ENCODE measurements at regions of chr7 and their contacts with region 1.

Region 1: GRCh38 chr7:25565949-25566348 is 337.7 kb upstream of the NPVF start:
- DNase-seq: peak; percentile 73
- H3K4me3 ChIP-seq: no peak overlapping the region
- H3K27ac ChIP-seq: peak overlapping the region in 2 of 4 donors; percentile 4 to 49
- H3K4me1 ChIP-seq: peaks cover 0 to 19% (median 4%) of the 10 kb centered on the region in 4 donors
- H3K27me3 ChIP-seq: no peaks in the 10 kb centered on the region
- CTCF ChIP-seq: peak; percentile 100
- EP300 ChIP-seq: no peak
- POLR2A ChIP-seq: no peak

Region 2: DNA sequence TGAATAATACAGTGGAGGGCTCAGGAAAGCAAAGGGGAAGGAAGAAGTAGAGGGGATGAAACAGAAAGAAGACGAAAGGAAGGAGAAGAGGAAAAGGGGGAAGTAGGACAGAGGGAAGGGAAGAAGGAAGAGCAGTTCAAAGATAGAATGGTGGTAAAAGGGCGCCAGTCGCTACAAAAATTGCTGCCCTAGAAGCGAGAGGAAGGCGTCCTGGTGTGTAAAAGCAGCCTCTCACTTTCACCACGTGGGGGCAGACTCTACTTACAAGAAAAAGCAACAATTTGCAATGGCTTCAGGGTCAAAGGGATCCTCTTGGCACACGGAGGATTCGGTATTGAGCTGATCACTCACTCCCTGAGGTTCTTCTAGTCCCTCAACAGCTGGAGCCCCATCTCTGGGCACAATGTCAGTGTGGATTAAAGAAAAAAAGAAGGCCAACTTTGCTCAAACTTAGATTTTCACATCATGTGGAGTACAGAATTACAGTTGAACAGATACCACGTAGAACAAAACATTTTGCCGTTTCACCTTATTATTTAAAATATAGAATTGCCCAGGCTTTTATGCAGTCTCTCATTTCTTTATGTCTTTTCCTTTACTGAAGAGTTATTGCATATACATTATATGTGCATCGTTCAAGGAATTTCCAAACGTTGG is 306.2 kb before region 1 on chr7:
- in situ Hi-C with region 1: loop called (anchors 5 to 10 kb)
- intact Hi-C with region 1: no loop called
- DNase-seq: peak; percentile 76
- H3K4me3 ChIP-seq: no peak overlapping the region
- H3K27ac ChIP-seq: peak overlapping the region in 2 of 4 donors; percentile 76 to 77
- H3K4me1 ChIP-seq: peaks cover 14 to 37% (median 29%) of the 10 kb centered on the region in 4 donors
- H3K27me3 ChIP-seq: no peaks in the 10 kb centered on the region
- CTCF ChIP-seq: peak; percentile 82 to 88 (median 83)
- EP300 ChIP-seq: no peak
- POLR2A ChIP-seq: no peak

Region 3: GRCh38 chr7:25520017-25520416 is 45.9 kb before region 1 on chr7:
- in situ Hi-C with region 1: no loop called
- intact Hi-C with region 1: loop called (anchors 1 kb)
- DNase-seq: no peak
- H3K4me3 ChIP-seq: no peak overlapping the region
- H3K27ac ChIP-seq: no peak overlapping the region
- H3K4me1 ChIP-seq: no peaks in the 10 kb centered on the region
- H3K27me3 ChIP-seq: no peaks in the 10 kb centered on the region
- CTCF ChIP-seq: no peak
- EP300 ChIP-seq: no peak
- POLR2A ChIP-seq: no peak

Region 4: GRCh38 chr7:25597946-25598345 is 32.0 kb after region 1 on chr7:
- in situ Hi-C with region 1: no loop called
- intact Hi-C with region 1: no loop called
- DNase-seq: no peak
- H3K4me3 ChIP-seq: no peak overlapping the region
- H3K27ac ChIP-seq: no peak overlapping the region
- H3K4me1 ChIP-seq: peaks cover 0 to 16% (median 5%) of the 10 kb centered on the region in 4 donors
- H3K27me3 ChIP-seq: no peaks in the 10 kb centered on the region
- CTCF ChIP-seq: no peak
- EP300 ChIP-seq: no peak
- POLR2A ChIP-seq: no peak

Region 5: DNA sequence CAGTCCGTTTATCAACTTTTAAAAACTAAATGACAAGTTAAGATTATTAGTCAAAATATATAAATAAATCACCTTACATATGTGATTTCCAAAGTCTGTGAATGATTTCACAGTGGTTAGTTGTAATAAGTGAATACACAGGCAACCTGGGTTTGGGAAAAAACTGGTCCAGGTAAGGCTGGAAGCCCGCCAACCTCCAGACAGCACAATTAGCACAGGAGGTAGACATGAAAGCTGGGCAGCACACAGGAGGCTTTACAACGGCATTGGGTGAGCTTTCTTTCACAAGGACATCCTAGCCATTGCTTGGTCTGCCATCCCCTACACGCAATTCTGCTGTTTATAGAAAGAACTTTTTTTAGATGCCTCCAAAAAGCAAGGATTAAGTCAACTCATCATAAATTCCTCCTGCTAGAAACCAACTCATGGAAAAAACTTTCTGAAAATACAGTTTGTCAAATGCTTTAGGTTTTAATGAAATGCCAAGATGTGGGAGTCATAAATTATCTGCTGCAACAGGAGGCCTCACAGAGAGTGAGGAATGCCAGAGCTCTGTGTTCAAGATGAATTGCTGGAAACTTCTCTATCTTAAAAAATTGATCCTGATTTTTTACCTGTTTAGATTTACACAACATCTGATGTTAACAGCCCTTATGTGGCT is 239.2 kb after region 1 on chr7:
- in situ Hi-C with region 1: no loop called
- intact Hi-C with region 1: no loop called
- DNase-seq: no peak
- H3K4me3 ChIP-seq: no peak overlapping the region
- H3K27ac ChIP-seq: peak overlapping the region in 3 of 4 donors; percentile 20 to 59 (median 55)
- H3K4me1 ChIP-seq: peaks cover 0 to 16% (median 5%) of the 10 kb centered on the region in 4 donors
- H3K27me3 ChIP-seq: no peaks in the 10 kb centered on the region
- CTCF ChIP-seq: no peak
- EP300 ChIP-seq: no peak
- POLR2A ChIP-seq: no peak